CD4-positive, alpha-beta T cell (primary cell): ENCODE measurements at regions of chr13 and their contacts with region 1.

Region 1: GRCh38 chr13:111153279-111153976 is 38.3 kb downstream of the ARHGEF7 start:
- DNase-seq: peak; percentile 82 to 95 (median 91)
- ATAC-seq: peak; percentile 85
- H3K4me3 ChIP-seq: peak overlapping the region; percentile 67
- H3K4me3 Mint-ChIP-seq: peak overlapping the region; percentile 99
- H3K27ac ChIP-seq: peak overlapping the region; percentile 50 to 62
- H3K27ac Mint-ChIP-seq: peak overlapping the region; percentile 93
- H3K4me1 ChIP-seq: peaks cover 27% of the 10 kb centered on the region
- H3K4me1 Mint-ChIP-seq: peaks cover 39% of the 10 kb centered on the region
- H3K27me3 ChIP-seq: no peaks in the 10 kb centered on the region
- H3K27me3 Mint-ChIP-seq: no peaks in the 10 kb centered on the region
- CTCF ChIP-seq: no peak

Region 2: DNA sequence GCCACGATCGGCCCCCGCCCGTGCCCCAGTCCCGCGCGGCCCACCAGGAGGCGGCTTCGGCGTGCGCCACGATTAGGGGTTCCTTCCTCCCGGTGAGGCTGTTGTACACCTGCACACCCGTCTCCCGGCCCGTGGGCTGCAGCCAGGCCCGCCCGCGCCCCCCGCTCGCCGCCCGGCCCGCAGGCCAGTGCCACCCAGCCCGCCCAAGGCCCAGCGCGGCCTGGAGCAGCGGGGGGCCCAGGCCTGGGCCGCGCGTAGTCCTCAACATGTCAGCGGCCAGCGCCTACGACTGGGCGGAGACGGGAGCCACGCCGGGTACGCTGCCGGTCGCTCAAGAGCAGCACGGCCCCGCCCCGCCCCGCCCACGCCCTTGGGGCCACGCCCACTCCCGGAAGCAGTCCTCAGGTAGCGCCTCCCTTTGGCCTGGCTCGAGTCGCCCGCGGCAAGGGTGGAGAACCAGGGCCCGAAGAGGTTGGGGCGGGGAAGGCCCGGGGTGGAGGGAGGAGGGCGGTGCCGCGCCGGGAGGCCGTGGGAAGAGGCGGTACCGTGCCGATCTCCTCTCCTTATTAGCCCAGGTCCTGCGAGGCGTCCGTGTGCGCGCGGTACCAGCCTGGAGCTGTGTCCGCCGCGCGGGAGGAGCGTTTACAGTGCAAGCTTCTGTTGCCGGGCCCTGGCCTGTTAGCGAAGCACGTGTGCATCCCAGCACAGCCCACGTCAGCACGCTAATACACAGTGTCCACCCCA is 447.4 kb before region 1 on chr13 and contains the start of gene CARS2:
- CTCF ChIA-PET with region 1: no interaction called
- POLR2A ChIA-PET with region 1: no interaction called
- intact Hi-C with region 1: loop called in 1 of 2 experiments (anchors 10 kb)
- DNase-seq: peak; percentile 83 to 98 (median 91)
- ATAC-seq: peak; percentile 91
- H3K4me3 ChIP-seq: peak within 1 kb of the TSS; percentile 71
- H3K4me3 Mint-ChIP-seq: peak within 1 kb of the TSS; percentile 94
- H3K27ac ChIP-seq: peak within 1 kb of the TSS in 1 of 2 donors; percentile 35
- H3K27ac Mint-ChIP-seq: peak within 1 kb of the TSS; percentile 92
- H3K4me1 ChIP-seq: peaks cover 41% of the 10 kb centered on the region
- H3K4me1 Mint-ChIP-seq: peaks cover 43% of the 10 kb centered on the region
- H3K27me3 ChIP-seq: no peaks in the 10 kb centered on the region
- H3K27me3 Mint-ChIP-seq: no peaks in the 10 kb centered on the region
- CTCF ChIP-seq: no peak
- total RNA-seq, gene CARS2: 50.2 to 56.5 TPM

Region 3: GRCh38 chr13:111111376-111111937 is 42.0 kb before region 1 on chr13:
- CTCF ChIA-PET with region 1: no interaction called
- POLR2A ChIA-PET with region 1: no interaction called
- intact Hi-C with region 1: no loop called
- DNase-seq: no peak
- ATAC-seq: no peak
- H3K4me3 ChIP-seq: no peak overlapping the region
- H3K4me3 Mint-ChIP-seq: no peak overlapping the region
- H3K27ac ChIP-seq: no peak overlapping the region
- H3K27ac Mint-ChIP-seq: no peak overlapping the region
- H3K4me1 ChIP-seq: peaks cover 17% of the 10 kb centered on the region
- H3K4me1 Mint-ChIP-seq: peaks cover 16% of the 10 kb centered on the region
- H3K27me3 ChIP-seq: peaks cover 45% of the 10 kb centered on the region in 2 experiments
- H3K27me3 Mint-ChIP-seq: peaks cover 83% of the 10 kb centered on the region
- CTCF ChIP-seq: no peak

Region 4: DNA sequence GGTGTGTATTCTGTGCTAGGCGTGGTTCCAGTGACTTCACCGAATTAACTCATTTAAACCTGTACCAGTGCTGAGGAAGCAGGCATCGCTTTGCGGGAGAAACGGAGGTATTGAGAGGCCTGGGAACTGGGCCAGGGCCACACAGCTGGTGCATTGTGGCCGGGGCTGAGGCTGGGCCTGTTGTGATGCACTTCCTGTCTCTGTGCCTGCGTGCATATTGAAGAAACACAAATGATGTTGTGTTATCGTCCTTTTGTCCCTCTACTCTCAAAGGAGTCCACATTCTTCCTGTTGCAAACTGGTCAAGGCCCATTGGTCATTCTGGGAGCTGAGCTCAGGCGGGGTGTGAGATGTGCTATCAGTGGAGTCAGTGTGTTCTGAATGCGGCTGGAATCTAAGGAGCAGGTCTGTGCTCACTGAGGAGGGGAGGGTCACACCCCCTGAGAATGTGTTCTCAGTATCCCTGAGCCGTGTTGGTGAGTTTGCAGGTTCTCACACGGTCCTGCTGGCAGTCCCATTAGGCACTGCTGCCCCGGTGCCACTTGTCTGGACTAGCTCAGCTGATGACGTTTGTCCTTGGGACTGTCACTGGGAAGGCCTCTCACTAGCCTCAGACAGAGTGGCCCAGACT is 23.8 kb after region 1 on chr13:
- CTCF ChIA-PET with region 1: no interaction called
- POLR2A ChIA-PET with region 1: interaction called, 4 read pairs
- intact Hi-C with region 1: loop called in 1 of 2 experiments (anchors 1 kb)
- DNase-seq: peak; percentile 32 to 89 (median 59)
- ATAC-seq: peak; percentile 86
- H3K4me3 ChIP-seq: no peak overlapping the region
- H3K4me3 Mint-ChIP-seq: peak overlapping the region; percentile 76
- H3K27ac ChIP-seq: peak overlapping the region; percentile 47 to 73
- H3K27ac Mint-ChIP-seq: peak overlapping the region; percentile 91
- H3K4me1 ChIP-seq: peaks cover 70% of the 10 kb centered on the region
- H3K4me1 Mint-ChIP-seq: peaks cover 85% of the 10 kb centered on the region
- H3K27me3 ChIP-seq: no peaks in the 10 kb centered on the region
- H3K27me3 Mint-ChIP-seq: no peaks in the 10 kb centered on the region
- CTCF ChIP-seq: no peak

Region 5: GRCh38 chr13:111184458-111185401 is 31.3 kb after region 1 on chr13:
- CTCF ChIA-PET with region 1: interaction called, 5 read pairs
- POLR2A ChIA-PET with region 1: interaction called, 8 read pairs
- intact Hi-C with region 1: loop called (anchors 1 to 2 kb)
- DNase-seq: peak in 13 of 14 experiments; percentile 19 to 73 (median 45)
- ATAC-seq: peak; percentile 55
- H3K4me3 ChIP-seq: peak overlapping the region; percentile 15
- H3K4me3 Mint-ChIP-seq: peak overlapping the region; percentile 78
- H3K27ac ChIP-seq: peak overlapping the region; percentile 46 to 58
- H3K27ac Mint-ChIP-seq: peak overlapping the region; percentile 94
- H3K4me1 ChIP-seq: peaks cover 89% of the 10 kb centered on the region
- H3K4me1 Mint-ChIP-seq: peaks cover 98% of the 10 kb centered on the region
- H3K27me3 ChIP-seq: no peaks in the 10 kb centered on the region
- H3K27me3 Mint-ChIP-seq: no peaks in the 10 kb centered on the region
- CTCF ChIP-seq: no peak

Region 6: DNA sequence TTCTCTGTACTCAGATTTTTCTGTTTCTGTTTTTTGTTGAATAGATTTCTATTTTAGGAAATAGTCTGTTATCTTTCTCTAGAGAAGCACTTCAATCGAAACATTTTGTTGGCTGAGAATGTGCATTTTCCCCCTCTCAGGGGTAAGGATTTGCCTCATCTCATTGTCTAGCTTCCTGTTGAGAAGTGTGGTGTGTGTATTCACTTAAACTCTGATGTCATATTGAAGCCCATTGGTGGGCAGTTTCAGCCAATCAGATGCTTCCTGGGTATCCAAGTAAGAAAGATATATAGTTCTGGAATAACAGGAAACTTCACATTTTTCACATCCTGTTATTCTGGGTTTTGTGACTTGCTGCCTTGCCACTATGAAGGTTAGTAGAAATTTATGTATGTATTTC is 49.3 kb after region 1 on chr13:
- CTCF ChIA-PET with region 1: no interaction called
- POLR2A ChIA-PET with region 1: interaction called, 5 read pairs
- intact Hi-C with region 1: loop called in 1 of 2 experiments (anchors 5 kb)
- DNase-seq: peak in 5 of 14 experiments; percentile 34 to 61 (median 50)
- ATAC-seq: peak; percentile 91
- H3K4me3 ChIP-seq: no peak overlapping the region
- H3K4me3 Mint-ChIP-seq: peak overlapping the region; percentile 68
- H3K27ac ChIP-seq: no peak overlapping the region
- H3K27ac Mint-ChIP-seq: peak overlapping the region; percentile 88
- H3K4me1 ChIP-seq: peaks cover 38% of the 10 kb centered on the region
- H3K4me1 Mint-ChIP-seq: peaks cover 82% of the 10 kb centered on the region
- H3K27me3 ChIP-seq: no peaks in the 10 kb centered on the region
- H3K27me3 Mint-ChIP-seq: no peaks in the 10 kb centered on the region
- CTCF ChIP-seq: no peak

Region 7: GRCh38 chr13:111216166-111216960 is 62.9 kb after region 1 on chr13:
- CTCF ChIA-PET with region 1: interaction called, 3 read pairs
- POLR2A ChIA-PET with region 1: interaction called, 3 read pairs
- intact Hi-C with region 1: loop called in 1 of 2 experiments (anchors 2 kb)
- DNase-seq: peak; percentile 19 to 68 (median 38)
- ATAC-seq: peak; percentile 69
- H3K4me3 ChIP-seq: no peak overlapping the region
- H3K4me3 Mint-ChIP-seq: no peak overlapping the region
- H3K27ac ChIP-seq: no peak overlapping the region
- H3K27ac Mint-ChIP-seq: peak overlapping the region; percentile 73
- H3K4me1 ChIP-seq: peaks cover 7% of the 10 kb centered on the region
- H3K4me1 Mint-ChIP-seq: peaks cover 64% of the 10 kb centered on the region
- H3K27me3 ChIP-seq: no peaks in the 10 kb centered on the region
- H3K27me3 Mint-ChIP-seq: no peaks in the 10 kb centered on the region
- CTCF ChIP-seq: peak; percentile 65